AG04449 (cell line): ENCODE measurements at regions of chr4 and their contacts with region 1.

Region 1: GRCh38 chr4:123661080-123661737 is 264.6 kb downstream of the SPRY1 start:
- DNase-seq: no peak
- H3K4me3 ChIP-seq: no peak overlapping the region
- CTCF ChIP-seq: peak; percentile 27

Region 2: GRCh38 chr4:123127218-123127617 is 534.0 kb before region 1 on chr4:
- CTCF ChIA-PET with region 1: interaction called, 29 read pairs
- POLR2A ChIA-PET with region 1: no interaction called
- DNase-seq: no peak
- H3K4me3 ChIP-seq: no peak overlapping the region
- CTCF ChIP-seq: no peak

Region 3: GRCh38 chr4:123396307-123397143 is 264.7 kb before region 1 on chr4 and contains the start of gene SPRY1:
- CTCF ChIA-PET with region 1: interaction called, 26 read pairs
- POLR2A ChIA-PET with region 1: no interaction called
- DNase-seq: no peak
- H3K4me3 ChIP-seq: peak within 1 kb of the TSS; percentile 67
- CTCF ChIP-seq: no peak

Region 4: DNA sequence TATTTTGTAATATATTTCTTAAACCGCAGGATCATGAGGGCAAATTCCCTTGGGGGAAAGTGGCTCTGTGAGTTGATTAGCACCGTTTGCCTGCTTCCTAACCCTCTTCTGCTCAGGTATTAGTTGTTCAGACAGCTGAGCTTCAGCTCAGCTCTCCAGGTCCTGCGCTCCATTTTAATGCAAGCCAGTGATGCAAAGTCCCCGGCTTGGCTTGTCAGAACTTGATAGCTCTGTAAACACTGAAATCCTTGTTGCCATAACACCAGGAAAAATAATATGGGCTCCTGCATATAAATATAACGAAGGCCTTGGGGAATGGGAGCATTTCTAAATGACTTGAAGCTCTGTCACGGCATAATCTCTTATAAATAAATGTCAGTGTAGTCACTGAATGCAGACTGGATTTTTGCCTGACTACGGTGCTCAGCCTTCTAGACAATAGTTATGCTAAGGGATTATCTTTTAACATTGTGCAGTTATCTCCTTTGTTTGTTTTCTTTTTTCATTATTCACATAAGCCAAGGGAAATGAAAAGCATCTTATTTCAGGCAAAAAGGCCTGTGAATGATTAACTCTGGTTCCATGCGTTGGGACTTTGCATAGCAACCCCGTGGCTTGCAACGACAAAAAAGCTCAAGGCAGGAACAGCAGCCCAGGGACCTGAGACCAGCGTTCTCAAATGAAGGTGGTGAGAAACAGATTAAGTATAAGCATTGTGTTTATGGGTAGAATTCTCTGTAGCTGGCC is 11.4 kb before region 1 on chr4:
- CTCF ChIA-PET with region 1: interaction called, 31 read pairs
- POLR2A ChIA-PET with region 1: no interaction called
- DNase-seq: no peak
- H3K4me3 ChIP-seq: no peak overlapping the region
- CTCF ChIP-seq: no peak

Region 5: DNA sequence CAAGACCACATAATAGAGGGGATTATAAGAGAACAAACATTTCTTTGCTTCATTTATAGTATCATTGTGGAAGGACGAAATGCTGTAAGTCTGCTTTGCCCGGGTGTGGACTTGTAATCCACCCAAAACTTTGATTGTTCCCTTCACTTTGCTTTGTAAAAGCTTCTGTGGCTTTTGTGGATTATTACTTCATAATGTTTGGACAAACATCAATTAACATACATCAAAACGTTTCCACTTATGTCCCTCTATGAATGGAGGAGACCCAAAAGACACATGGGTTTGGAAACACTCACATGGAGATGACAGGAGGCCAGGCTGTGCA is 150.8 kb after region 1 on chr4:
- CTCF ChIA-PET with region 1: no interaction called
- POLR2A ChIA-PET with region 1: no interaction called
- DNase-seq: no peak
- H3K4me3 ChIP-seq: no peak overlapping the region
- CTCF ChIP-seq: no peak